Caco-2 (cell line): ENCODE measurements at regions of chr1 and their contacts with region 1.

Region 1: GRCh38 chr1:87787551-87787950 is 458.9 kb downstream of the LMO4 start:
- DNase-seq: peak; percentile 60 to 66
- H3K4me3 ChIP-seq: no peak overlapping the region
- H3K4me3 Mint-ChIP-seq: peak overlapping the region; percentile 58
- H3K27ac Mint-ChIP-seq: peak overlapping the region; percentile 85
- H3K4me1 ChIP-seq: peaks cover 60% of the 10 kb centered on the region
- H3K4me1 Mint-ChIP-seq: peaks cover 47% of the 10 kb centered on the region
- H3K27me3 ChIP-seq: no peaks in the 10 kb centered on the region
- H3K27me3 Mint-ChIP-seq: no peaks in the 10 kb centered on the region
- CTCF ChIP-seq: peak in 1 of 2 experiments; percentile 15

Region 2: GRCh38 chr1:87706203-87706602 is 81.3 kb before region 1 on chr1:
- CTCF ChIA-PET with region 1: no interaction called
- POLR2A ChIA-PET with region 1: no interaction called
- intact Hi-C with region 1: no loop called
- DNase-seq: no peak
- H3K4me3 ChIP-seq: no peak overlapping the region
- H3K4me3 Mint-ChIP-seq: no peak overlapping the region
- H3K27ac Mint-ChIP-seq: no peak overlapping the region
- H3K4me1 ChIP-seq: peaks cover 10% of the 10 kb centered on the region
- H3K4me1 Mint-ChIP-seq: peaks cover 8% of the 10 kb centered on the region
- H3K27me3 ChIP-seq: no peaks in the 10 kb centered on the region
- H3K27me3 Mint-ChIP-seq: no peaks in the 10 kb centered on the region
- CTCF ChIP-seq: no peak

Region 3: DNA sequence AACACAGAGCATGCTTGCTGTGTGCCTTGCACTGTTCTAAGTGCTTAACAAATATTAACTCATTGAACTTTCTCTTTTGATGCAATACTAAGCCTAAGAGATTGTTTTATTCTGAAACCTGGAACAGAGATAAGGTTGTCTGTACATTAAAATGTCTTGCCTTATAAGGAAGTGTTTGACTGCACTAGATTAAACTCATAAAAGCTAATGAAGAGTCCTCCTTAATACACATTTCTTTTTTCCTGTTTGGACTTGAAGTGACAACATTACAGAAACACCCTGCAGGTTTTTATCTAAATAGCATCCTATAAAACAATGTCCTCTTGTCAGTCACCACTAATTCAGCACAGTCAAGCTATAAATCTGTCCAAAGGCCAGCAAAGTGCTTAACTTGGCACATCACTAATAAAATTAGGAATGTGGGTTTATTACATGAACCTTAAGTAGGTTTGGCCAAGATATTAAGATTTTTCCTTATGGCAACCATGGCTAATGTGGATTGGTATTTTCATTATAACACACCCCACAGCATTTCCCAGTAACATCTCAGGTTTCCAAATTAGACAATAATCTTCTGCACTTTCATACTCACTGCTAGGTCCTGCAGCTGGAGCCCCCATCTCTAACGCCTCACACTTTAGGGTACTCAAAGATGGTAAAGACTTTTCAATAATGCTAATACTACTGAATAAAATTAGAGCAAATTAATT is 69.2 kb before region 1 on chr1:
- CTCF ChIA-PET with region 1: no interaction called
- POLR2A ChIA-PET with region 1: no interaction called
- intact Hi-C with region 1: loop called (anchors 1 kb)
- DNase-seq: peak; percentile 4 to 46
- H3K4me3 ChIP-seq: no peak overlapping the region
- H3K4me3 Mint-ChIP-seq: no peak overlapping the region
- H3K27ac Mint-ChIP-seq: peak overlapping the region; percentile 67
- H3K4me1 ChIP-seq: peaks cover 23% of the 10 kb centered on the region
- H3K4me1 Mint-ChIP-seq: peaks cover 27% of the 10 kb centered on the region
- H3K27me3 ChIP-seq: no peaks in the 10 kb centered on the region
- H3K27me3 Mint-ChIP-seq: no peaks in the 10 kb centered on the region
- CTCF ChIP-seq: no peak

Region 4: GRCh38 chr1:87840767-87841166 is 53.2 kb after region 1 on chr1:
- CTCF ChIA-PET with region 1: no interaction called
- POLR2A ChIA-PET with region 1: no interaction called
- intact Hi-C with region 1: no loop called
- DNase-seq: no peak
- H3K4me3 ChIP-seq: no peak overlapping the region
- H3K4me3 Mint-ChIP-seq: no peak overlapping the region
- H3K27ac Mint-ChIP-seq: no peak overlapping the region
- H3K4me1 ChIP-seq: 0 out of 2 replicates have a peak, but pooled peaks cover 3% of the 10 kb centered on the region
- H3K4me1 Mint-ChIP-seq: no peaks in the 10 kb centered on the region
- H3K27me3 ChIP-seq: no peaks in the 10 kb centered on the region
- H3K27me3 Mint-ChIP-seq: no peaks in the 10 kb centered on the region
- CTCF ChIP-seq: no peak

Region 5: GRCh38 chr1:87888446-87888845 is 100.9 kb after region 1 on chr1:
- CTCF ChIA-PET with region 1: no interaction called
- POLR2A ChIA-PET with region 1: no interaction called
- intact Hi-C with region 1: loop called (anchors 1 kb)
- DNase-seq: peak in 1 of 2 experiments; percentile 47
- H3K4me3 ChIP-seq: no peak overlapping the region
- H3K4me3 Mint-ChIP-seq: no peak overlapping the region
- H3K27ac Mint-ChIP-seq: peak overlapping the region; percentile 85
- H3K4me1 ChIP-seq: peaks cover 45% of the 10 kb centered on the region
- H3K4me1 Mint-ChIP-seq: peaks cover 25% of the 10 kb centered on the region
- H3K27me3 ChIP-seq: no peaks in the 10 kb centered on the region
- H3K27me3 Mint-ChIP-seq: no peaks in the 10 kb centered on the region
- CTCF ChIP-seq: no peak